ENCODE measurements at regions of chr19 and their contacts with region 1.

Region 1: DNA sequence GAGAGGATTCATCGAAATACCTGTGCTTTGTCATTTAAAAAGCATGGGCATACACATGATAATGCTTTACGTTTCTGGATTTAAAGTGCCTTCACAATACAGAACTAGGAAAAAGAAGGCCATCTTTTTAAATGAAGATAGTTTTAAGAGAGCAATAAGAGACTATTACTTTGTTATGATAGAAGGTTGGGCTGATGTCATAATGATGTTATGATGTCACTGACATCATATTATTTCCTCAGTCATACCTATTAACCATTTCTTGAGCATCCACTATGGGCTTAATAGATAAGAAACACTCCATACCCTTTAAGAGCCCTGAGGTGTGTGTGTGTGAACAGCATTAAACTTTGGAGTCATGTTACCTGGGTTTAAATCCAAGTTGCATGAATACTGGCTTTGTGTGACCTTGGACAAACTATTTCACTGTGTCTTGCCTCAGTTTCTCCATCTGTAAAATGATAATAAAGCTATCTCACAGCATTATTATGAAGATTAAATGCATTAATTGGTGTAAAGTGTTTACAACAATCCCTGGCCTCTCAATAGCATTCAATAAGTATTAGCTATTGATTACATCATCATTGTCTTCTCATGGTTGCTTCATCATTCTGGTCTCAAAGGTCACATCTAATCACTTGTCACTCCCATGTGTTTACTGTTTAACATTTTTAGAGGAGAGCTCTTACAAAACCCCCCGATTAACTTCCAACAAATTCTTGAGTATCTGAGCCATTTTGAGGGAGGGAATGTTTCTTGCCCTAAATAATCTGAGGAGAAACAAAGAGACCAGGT is 11.1 kb downstream of the ZNF181 start:
- DNase-seq: no peak
- ATAC-seq: no peak
- H3K4me3 ChIP-seq: no peak overlapping the region
- H3K27ac ChIP-seq: no peak overlapping the region
- H3K4me1 ChIP-seq: no peaks in the 10 kb centered on the region
- H3K27me3 ChIP-seq: no peaks in the 10 kb centered on the region
- CTCF ChIP-seq: no peak
- EP300 ChIP-seq: no peak
- POLR2A ChIP-seq: no peak
- RAD21 ChIP-seq: no peak

Region 2: DNA sequence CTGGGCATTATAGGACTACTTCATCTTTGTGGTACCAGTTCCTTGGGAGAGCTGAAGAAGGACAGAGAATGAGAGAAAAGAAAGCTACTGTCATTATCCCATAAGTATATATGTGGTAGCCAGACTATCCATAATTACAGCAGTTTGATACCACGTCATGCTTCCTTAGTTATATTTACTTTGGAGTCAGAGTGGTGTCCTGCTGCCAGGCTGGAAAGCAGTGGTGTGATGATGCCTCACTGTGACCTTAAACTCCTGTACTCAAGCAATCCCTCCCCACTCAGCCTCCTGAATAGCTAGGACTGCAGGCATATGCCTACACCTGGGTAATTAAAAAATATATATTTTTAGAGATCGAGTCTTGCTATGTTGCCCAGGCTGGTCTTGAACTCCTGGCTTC is 205.7 kb before region 1 on chr19:
- CTCF ChIA-PET with region 1: no interaction called
- POLR2A ChIA-PET with region 1: no interaction called
- RAD21 ChIA-PET with region 1: no interaction called
- SMC1A ChIA-PET with region 1: no interaction called
- in situ Hi-C with region 1: loop called (anchors 5 kb)
- intact Hi-C with region 1: no loop called
- DNase-seq: no peak
- ATAC-seq: no peak
- H3K4me3 ChIP-seq: no peak overlapping the region
- H3K27ac ChIP-seq: no peak overlapping the region
- H3K4me1 ChIP-seq: no peaks in the 10 kb centered on the region; the same call in 1 of the 2 replicates
- H3K27me3 ChIP-seq: no peaks in the 10 kb centered on the region
- CTCF ChIP-seq: no peak
- EP300 ChIP-seq: no peak
- POLR2A ChIP-seq: no peak
- RAD21 ChIP-seq: no peak

Region 3: DNA sequence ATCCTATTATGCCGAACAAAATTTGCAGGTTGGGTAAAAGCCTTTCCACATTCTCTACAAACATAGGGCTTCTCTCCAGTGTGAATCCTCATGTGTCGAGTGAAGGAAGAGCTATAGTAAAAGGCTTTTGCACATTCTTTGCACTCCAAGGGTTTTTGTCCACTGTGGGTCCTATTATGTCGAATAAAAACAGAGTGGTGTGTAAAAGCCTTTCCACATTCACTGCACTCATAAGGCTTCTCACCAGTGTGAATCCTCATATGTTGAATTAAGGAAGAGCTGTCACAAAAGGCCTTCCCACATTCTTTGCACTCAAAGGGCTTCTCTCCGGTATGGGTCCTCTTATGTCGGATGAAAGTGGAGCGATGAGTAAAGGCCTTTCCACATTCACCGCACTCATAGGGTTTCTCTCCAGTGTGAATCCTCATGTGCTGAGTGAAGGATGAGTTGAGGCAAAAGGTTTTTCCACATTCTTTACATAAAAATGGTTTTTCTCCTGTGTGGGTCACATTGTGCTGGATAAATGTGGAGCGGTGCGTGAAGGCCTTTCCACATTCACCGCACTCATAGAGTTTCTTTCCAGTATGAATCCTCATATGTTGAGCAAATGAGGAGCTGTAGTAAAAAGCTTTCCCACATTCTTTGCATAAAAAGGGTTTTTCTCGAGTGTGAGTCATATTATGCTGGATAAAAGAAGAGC is 14.3 kb after region 1 on chr19:
- CTCF ChIA-PET with region 1: no interaction called
- POLR2A ChIA-PET with region 1: no interaction called
- RAD21 ChIA-PET with region 1: no interaction called
- SMC1A ChIA-PET with region 1: no interaction called
- in situ Hi-C with region 1: no loop called
- intact Hi-C with region 1: no loop called
- DNase-seq: no peak
- ATAC-seq: no peak
- H3K4me3 ChIP-seq: no peak overlapping the region
- H3K27ac ChIP-seq: no peak overlapping the region
- H3K4me1 ChIP-seq: no peaks in the 10 kb centered on the region
- H3K27me3 ChIP-seq: no peaks in the 10 kb centered on the region
- CTCF ChIP-seq: no peak
- EP300 ChIP-seq: no peak
- POLR2A ChIP-seq: no peak
- RAD21 ChIP-seq: no peak

Measured in GM12878 (cell line).